MCF 10A (cell line): ENCODE measurements at regions of chr6 and their contacts with region 1.

Region 1: GRCh38 chr6:21742238-21742660 is 148.7 kb downstream of the SOX4 start:
- DNase-seq: peak; percentile 96
- H3K4me3 Mint-ChIP-seq: peak overlapping the region; percentile 36
- H3K27ac Mint-ChIP-seq: peak overlapping the region; percentile 94
- H3K4me1 Mint-ChIP-seq: peaks cover 46% of the 10 kb centered on the region
- H3K27me3 Mint-ChIP-seq: no peaks in the 10 kb centered on the region
- CTCF ChIP-seq: no peak

Region 2: GRCh38 chr6:21707524-21708319 is 34.5 kb before region 1 on chr6:
- CTCF ChIA-PET with region 1: no interaction called
- POLR2A ChIA-PET with region 1: no interaction called
- intact Hi-C with region 1: no loop called
- DNase-seq: no peak
- H3K4me3 Mint-ChIP-seq: no peak overlapping the region
- H3K27ac Mint-ChIP-seq: no peak overlapping the region
- H3K4me1 Mint-ChIP-seq: no peaks in the 10 kb centered on the region
- H3K27me3 Mint-ChIP-seq: no peaks in the 10 kb centered on the region
- CTCF ChIP-seq: no peak

Region 3: GRCh38 chr6:21731411-21732031 is 10.7 kb before region 1 on chr6:
- CTCF ChIA-PET with region 1: interaction called, 3 read pairs
- POLR2A ChIA-PET with region 1: interaction called, 18 read pairs
- intact Hi-C with region 1: no loop called
- DNase-seq: peak; percentile 92
- H3K4me3 Mint-ChIP-seq: peak overlapping the region; percentile 45
- H3K27ac Mint-ChIP-seq: peak overlapping the region; percentile 80
- H3K4me1 Mint-ChIP-seq: peaks cover 14% of the 10 kb centered on the region
- H3K27me3 Mint-ChIP-seq: no peaks in the 10 kb centered on the region
- CTCF ChIP-seq: no peak